Kidney (tissue), 22 donors: ENCODE measurements at regions of chr19 and their contacts with region 1.

Region 1: GRCh38 chr19:11203194-11204075 is 6.1 kb upstream of the KANK2 start:
- DNase-seq: peak; percentile 41 to 94 (median 73)
- H3K4me3 ChIP-seq: no peak overlapping the region
- H3K27ac ChIP-seq: peak overlapping the region; percentile 75 to 85
- H3K4me1 ChIP-seq: peaks cover 0 to 18% (median 15%) of the 10 kb centered on the region in 3 donors
- H3K27me3 ChIP-seq: no peaks in the 10 kb centered on the region
- CTCF ChIP-seq: peak; percentile 70

Region 2: GRCh38 chr19:11137542-11138384 is 65.7 kb before region 1 on chr19:
- intact Hi-C with region 1: loop called (anchors 5 kb)
- DNase-seq: peak; percentile 86 to 95 (median 92)
- H3K4me3 ChIP-seq: peak overlapping the region in 2 of 3 donors; percentile 15 to 60
- H3K27ac ChIP-seq: peak overlapping the region; percentile 66 to 78
- H3K4me1 ChIP-seq: peaks cover 0 to 29% (median 17%) of the 10 kb centered on the region in 3 donors
- H3K27me3 ChIP-seq: no peaks in the 10 kb centered on the region
- CTCF ChIP-seq: peak; percentile 82

Region 3: DNA sequence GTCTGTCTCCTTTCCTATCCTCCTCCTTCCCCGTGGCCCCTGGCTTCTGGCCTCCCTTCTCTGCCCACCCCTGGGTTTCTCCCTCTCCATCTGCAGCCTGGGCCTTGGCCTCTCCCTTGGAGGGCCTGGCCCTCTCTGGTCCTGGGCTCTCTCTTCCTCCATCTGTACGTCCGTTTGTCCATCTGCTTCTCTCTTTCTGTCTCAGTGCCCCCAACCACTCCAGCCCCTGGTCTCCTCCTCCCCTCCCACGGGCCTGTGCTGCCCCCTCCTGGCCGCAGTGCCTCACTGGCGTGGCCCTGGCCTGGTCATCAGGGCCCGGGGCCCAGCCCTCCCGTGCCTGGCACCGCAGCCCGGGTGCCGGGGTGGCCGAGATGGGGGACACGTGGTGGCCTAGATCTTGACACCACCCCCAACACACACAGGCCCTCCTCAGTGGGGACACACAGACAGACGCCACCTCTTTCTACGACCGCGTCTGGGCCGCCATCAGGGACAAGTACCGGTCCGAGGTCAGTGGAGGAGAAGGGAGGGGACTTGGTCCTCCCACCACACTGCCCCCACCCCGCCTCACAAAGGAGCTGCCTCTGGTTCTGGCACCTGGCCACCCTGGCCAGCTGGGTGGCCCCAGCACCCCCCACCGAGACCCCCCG is 243.3 kb after region 1 on chr19:
- intact Hi-C with region 1: no loop called
- DNase-seq: peak; percentile 45 to 73 (median 62)
- H3K4me3 ChIP-seq: no peak overlapping the region
- H3K27ac ChIP-seq: no peak overlapping the region
- H3K4me1 ChIP-seq: no peaks in the 10 kb centered on the region
- H3K27me3 ChIP-seq: no peaks in the 10 kb centered on the region
- CTCF ChIP-seq: peak; percentile 68